ENCODE measurements at regions of chr5 and their contacts with region 1.

Region 1: DNA sequence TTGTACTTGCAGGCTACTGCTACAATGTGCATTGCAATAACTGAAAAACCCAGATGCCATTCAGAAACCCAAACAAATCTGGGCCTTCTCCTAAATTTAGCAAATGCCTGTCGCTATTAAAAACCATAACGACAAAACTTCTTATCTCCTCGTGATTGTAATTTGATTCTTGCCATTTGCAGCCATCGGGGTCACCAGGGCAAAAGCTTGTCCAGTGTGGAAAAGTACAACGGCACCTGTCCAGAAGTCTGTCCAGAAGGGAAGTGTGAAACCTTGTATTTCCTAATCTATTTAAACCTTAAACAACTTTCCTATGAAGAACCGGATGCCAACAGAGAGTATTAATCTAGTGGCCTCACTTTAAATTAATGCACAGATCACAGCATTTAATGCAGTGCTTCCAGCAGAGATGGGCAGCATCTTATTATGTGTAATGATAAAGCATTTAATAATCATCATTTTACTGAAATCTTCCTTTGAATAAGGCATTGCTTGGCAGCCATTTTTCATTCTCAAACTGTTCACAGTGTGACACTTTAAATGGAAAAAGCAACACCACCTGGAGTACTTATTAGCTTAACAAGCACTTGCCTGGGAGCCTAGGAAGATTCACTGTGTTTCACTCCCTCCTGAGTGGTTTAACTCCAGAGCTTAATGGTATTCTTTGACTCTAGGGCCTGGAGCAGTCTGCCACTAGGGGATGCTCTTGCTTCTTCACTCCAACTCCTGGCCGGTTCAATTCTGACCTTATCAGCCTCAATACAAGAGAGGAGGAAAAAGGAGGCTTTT is 4.9 kb upstream of the C7 start:
- DNase-seq: peak; percentile 62 to 79 (median 66)
- ATAC-seq: peak; percentile 94 to 95
- H3K4me3 ChIP-seq: no peak overlapping the region
- H3K27ac ChIP-seq: peak overlapping the region; percentile 20
- H3K4me1 ChIP-seq: no peaks in the 10 kb centered on the region
- H3K27me3 ChIP-seq: no peaks in the 10 kb centered on the region

Region 2: GRCh38 chr5:41115281-41115680 is 210.9 kb after region 1 on chr5:
- intact Hi-C with region 1: loop called in 1 of 4 experiments (anchors 10 kb)
- DNase-seq: no peak
- ATAC-seq: no peak
- H3K4me3 ChIP-seq: no peak overlapping the region
- H3K27ac ChIP-seq: no peak overlapping the region
- H3K4me1 ChIP-seq: no peaks in the 10 kb centered on the region
- H3K27me3 ChIP-seq: no peaks in the 10 kb centered on the region

Region 3: GRCh38 chr5:41270423-41271251 is 366.2 kb after region 1 on chr5:
- intact Hi-C with region 1: loop called in 2 of 4 experiments (anchors 10 kb)
- DNase-seq: peak in 2 of 3 donors; percentile 33 to 53
- ATAC-seq: peak; percentile 92 to 95
- H3K4me3 ChIP-seq: no peak overlapping the region
- H3K27ac ChIP-seq: no peak overlapping the region
- H3K4me1 ChIP-seq: no peaks in the 10 kb centered on the region
- H3K27me3 ChIP-seq: no peaks in the 10 kb centered on the region

Region 4: GRCh38 chr5:41636605-41637004 is 732.2 kb after region 1 on chr5:
- intact Hi-C with region 1: loop called in 2 of 4 experiments (anchors 10 kb)
- DNase-seq: no peak
- ATAC-seq: peak; percentile 47 to 51
- H3K4me3 ChIP-seq: no peak overlapping the region
- H3K27ac ChIP-seq: no peak overlapping the region
- H3K4me1 ChIP-seq: no peaks in the 10 kb centered on the region
- H3K27me3 ChIP-seq: no peaks in the 10 kb centered on the region

Region 5: GRCh38 chr5:41835645-41836044 is 931.2 kb after region 1 on chr5:
- intact Hi-C with region 1: loop called in 1 of 4 experiments (anchors 10 kb)
- DNase-seq: peak; percentile 50 to 74 (median 70)
- ATAC-seq: peak; percentile 89 to 93
- H3K4me3 ChIP-seq: no peak overlapping the region
- H3K27ac ChIP-seq: peak overlapping the region; percentile 94
- H3K4me1 ChIP-seq: peaks cover 2% of the 10 kb centered on the region
- H3K27me3 ChIP-seq: no peaks in the 10 kb centered on the region